ENCODE measurements at regions of chr2 and their contacts with region 1.

Region 1: DNA sequence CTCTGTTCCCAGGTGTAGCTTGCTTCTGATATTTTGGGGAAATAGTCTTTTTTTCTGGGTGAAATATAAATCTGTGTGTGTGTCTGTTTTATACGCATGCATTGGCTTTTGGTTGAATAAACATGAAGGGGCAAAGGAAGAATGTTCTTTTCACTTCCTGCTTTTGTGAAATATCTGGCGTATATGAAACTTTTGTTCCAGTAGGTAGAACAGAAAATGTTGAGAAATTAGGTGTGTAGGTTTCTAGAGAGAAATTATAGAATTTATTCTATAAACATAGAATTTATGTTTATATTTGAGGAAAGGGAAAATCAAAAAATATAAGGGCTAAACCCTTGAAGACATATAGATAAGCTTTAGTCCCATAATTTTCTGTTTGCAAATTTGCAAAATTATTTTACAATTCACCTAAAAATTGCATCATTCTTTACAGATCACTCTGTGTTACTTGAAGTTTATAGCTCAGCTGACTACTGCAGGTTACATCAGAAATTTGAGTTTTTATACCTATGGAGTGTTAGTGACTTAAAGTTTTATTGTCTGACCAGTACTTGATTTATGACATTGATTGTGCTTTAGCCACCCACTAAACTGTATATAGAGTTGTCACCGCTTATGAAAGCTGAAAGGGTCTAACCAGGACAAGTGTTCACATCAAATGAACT is 116.1 kb downstream of the FAM117B start:
- DNase-seq: peak; percentile 32
- H3K4me3 Mint-ChIP-seq: peak overlapping the region; percentile 25
- H3K27ac Mint-ChIP-seq: peak overlapping the region; percentile 75
- H3K4me1 Mint-ChIP-seq: peaks cover 15% of the 10 kb centered on the region
- H3K27me3 Mint-ChIP-seq: no peaks in the 10 kb centered on the region
- CTCF ChIP-seq: no peak

Region 2: DNA sequence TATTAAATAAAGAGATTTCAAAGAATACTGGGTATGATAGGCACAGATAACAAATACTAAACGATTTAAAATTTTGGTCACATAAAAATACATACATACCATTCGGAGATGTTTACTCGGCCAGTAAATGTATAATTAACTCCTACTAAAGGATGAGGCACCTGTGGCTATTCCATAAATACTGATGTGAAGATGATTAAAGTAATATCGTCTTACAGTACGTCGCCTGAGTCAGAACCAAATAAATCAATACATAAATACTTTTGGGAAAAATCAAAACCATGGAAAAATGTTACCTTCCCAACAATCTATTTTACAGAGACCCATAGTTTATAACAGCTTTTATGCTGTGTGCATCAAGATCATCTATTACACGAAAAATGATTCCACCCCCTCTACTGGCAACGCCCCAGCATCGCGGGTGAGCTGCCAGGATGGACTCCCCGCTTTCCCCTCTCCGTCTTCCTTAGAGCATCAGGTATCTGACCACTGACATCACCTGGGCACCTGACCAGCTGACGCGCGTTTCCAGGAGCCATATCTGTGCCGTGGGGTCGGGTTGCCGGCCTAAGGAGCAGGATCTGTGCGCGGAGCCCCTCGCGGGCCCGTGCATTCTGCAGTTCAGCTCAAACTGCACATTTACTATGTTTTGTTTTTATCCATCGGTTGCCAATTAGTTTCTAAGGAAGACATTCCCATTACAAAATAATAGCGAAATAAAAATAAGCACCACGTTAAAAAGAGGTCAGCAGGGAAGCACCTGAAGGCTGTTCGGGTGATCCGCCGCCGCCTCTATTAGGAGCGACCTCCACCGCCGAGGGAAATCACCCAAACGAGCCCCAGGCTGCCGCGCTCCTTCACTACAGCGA is 119.8 kb after region 1 on chr2:
- CTCF ChIA-PET with region 1: no interaction called
- POLR2A ChIA-PET with region 1: no interaction called
- intact Hi-C with region 1: loop called (anchors 10 kb)
- DNase-seq: peak; percentile 86
- H3K4me3 Mint-ChIP-seq: peak overlapping the region; percentile 72
- H3K27ac Mint-ChIP-seq: peak overlapping the region; percentile 57
- H3K4me1 Mint-ChIP-seq: peaks cover 5% of the 10 kb centered on the region
- H3K27me3 Mint-ChIP-seq: no peaks in the 10 kb centered on the region
- CTCF ChIP-seq: peak; percentile 52